Activated naive CD4-positive, alpha-beta T cell treated with anti-CD3 and anti-CD28 coated beads for 36 hours (primary cell): ENCODE measurements at regions of chr9 and their contacts with region 1.

Region 1: GRCh38 chr9:19085295-19085694 is 17.4 kb downstream of the HAUS6 start:
- DNase-seq: no peak
- H3K4me3 Mint-ChIP-seq: no peak overlapping the region
- H3K27ac Mint-ChIP-seq: no peak overlapping the region
- H3K4me1 Mint-ChIP-seq: no peaks in the 10 kb centered on the region
- H3K27me3 Mint-ChIP-seq: no peaks in the 10 kb centered on the region

Region 2: DNA sequence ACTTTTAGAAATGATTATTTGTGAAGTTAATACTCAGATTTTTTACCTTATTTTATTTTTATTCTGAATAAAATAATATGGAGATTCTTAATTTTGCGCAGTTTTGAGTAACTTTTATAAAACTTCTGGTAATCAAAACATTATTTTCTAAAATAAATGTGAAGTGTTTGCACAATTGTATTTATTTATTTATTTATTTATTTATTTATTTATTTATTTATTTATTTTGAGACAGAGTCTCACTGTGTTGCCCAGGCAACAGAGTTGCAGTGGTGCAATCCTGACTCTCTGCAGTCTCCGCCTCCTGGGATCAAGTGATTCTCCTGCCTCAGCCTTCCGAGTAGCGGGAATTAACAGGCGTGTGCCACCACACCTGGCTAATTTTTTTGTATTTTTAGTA is 221.3 kb after region 1 on chr9:
- CTCF ChIA-PET with region 1: no interaction called
- intact Hi-C with region 1: loop called (anchors 10 kb)
- DNase-seq: no peak
- H3K4me3 Mint-ChIP-seq: no peak overlapping the region
- H3K27ac Mint-ChIP-seq: no peak overlapping the region
- H3K4me1 Mint-ChIP-seq: no peaks in the 10 kb centered on the region
- H3K27me3 Mint-ChIP-seq: no peaks in the 10 kb centered on the region